ENCODE measurements at regions of chr9 and their contacts with region 1.

Region 1: DNA sequence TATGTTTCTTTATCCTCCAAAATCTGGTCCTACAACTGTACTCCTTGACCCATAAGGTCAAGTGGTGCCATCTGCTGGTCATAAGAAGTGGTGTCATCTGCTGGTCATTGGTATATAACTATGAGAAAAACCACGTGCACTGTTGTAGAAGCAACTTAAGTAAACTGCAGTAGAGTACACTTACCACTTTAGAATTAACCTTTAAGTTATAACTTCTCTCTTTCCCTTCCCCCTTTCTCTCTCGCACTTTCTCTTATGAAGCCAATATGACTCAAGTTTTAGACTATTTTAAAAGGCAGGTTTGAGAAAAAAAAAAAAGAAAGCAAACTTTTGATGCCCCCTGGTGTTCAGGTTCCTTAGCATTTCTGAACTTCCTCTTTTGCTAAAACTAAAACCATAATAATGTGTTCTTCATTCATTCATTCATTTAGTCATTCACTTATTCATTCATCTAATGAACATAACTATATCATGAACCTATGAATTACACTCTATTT is 12.8 kb upstream of the MTAP start:
- DNase-seq: peak; percentile 66 to 76 (median 74)
- H3K4me3 ChIP-seq: no peak overlapping the region
- H3K4me3 Mint-ChIP-seq: peak overlapping the region; percentile 8 to 88 (median 76)
- H3K27ac ChIP-seq: no peak overlapping the region
- H3K27ac Mint-ChIP-seq: peak overlapping the region in 4 of 7 donors; percentile 3 to 61 (median 30)
- H3K4me1 ChIP-seq: no peaks in the 10 kb centered on the region
- H3K4me1 Mint-ChIP-seq: peaks cover 0 to 1% (median 0%) of the 10 kb centered on the region in 4 donors
- H3K27me3 ChIP-seq: no peaks in the 10 kb centered on the region
- H3K27me3 Mint-ChIP-seq: peaks cover 2 to 8% of the 10 kb centered on the region in 2 donors

Region 2: GRCh38 chr9:21154018-21154608 is 635.5 kb before region 1 on chr9:
- CTCF ChIA-PET with region 1: no interaction called
- POLR2A ChIA-PET with region 1: no interaction called
- intact Hi-C with region 1: loop called (anchors 1 kb)
- DNase-seq: peak in 4 of 5 donors; percentile 6 to 27 (median 22)
- H3K4me3 ChIP-seq: no peak overlapping the region
- H3K4me3 Mint-ChIP-seq: peak overlapping the region in 1 of 8 donors; percentile 59
- H3K27ac ChIP-seq: no peak overlapping the region
- H3K27ac Mint-ChIP-seq: peak overlapping the region in 2 of 7 donors; percentile 58 to 59
- H3K4me1 ChIP-seq: peaks cover 4% of the 10 kb centered on the region
- H3K4me1 Mint-ChIP-seq: peaks cover 4 to 9% (median 7%) of the 10 kb centered on the region in 4 donors
- H3K27me3 ChIP-seq: no peaks in the 10 kb centered on the region
- H3K27me3 Mint-ChIP-seq: peaks cover 0 to 1% of the 10 kb centered on the region in 2 donors

Region 3: DNA sequence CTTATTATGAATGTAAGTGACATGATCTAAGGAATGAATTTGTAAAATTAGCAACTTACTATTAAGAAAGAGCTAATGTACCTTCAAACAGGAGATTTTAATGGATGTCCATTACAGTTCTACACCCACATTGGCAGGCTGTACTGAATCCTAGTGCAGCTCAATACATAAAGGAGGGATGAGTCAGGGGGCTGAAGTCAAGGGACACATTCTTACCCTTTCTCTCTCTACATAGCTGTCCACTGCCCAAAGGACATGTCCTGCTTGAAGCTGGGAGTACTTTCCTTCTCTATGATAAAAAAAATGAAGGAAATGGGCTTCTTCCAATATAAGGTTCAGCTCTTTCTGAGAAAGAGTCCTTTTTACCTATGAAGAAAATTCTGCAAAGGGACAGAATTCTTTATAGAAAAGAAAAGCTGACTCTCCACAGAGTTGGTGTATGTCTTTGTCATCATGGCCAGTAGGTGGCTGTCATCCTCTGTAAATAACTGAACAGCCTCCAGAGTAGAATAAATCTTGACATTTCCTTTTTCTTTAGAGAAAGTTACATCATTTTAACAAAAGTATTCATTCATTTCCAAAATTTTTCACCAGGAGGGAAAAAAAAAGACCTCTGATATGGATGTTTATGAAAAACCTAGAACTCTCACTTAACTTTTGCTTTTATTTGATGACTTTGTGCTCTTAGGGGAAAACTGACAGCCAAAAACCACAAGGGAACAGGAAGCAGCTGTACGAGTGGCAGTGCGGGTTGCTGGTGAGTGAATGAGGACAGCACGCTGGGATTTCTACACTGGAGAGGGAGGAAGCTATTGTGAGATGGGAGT is 536.7 kb before region 1 on chr9:
- CTCF ChIA-PET with region 1: interaction called, 4 read pairs
- POLR2A ChIA-PET with region 1: no interaction called
- intact Hi-C with region 1: loop called (anchors 1 kb)
- DNase-seq: peak; percentile 8 to 60 (median 22)
- H3K4me3 ChIP-seq: no peak overlapping the region
- H3K4me3 Mint-ChIP-seq: peak overlapping the region in 3 of 8 donors; percentile 3 to 64 (median 54)
- H3K27ac ChIP-seq: no peak overlapping the region
- H3K27ac Mint-ChIP-seq: no peak overlapping the region
- H3K4me1 ChIP-seq: peaks cover 7% of the 10 kb centered on the region
- H3K4me1 Mint-ChIP-seq: peaks cover 3 to 6% (median 5%) of the 10 kb centered on the region in 4 donors
- H3K27me3 ChIP-seq: no peaks in the 10 kb centered on the region
- H3K27me3 Mint-ChIP-seq: peaks cover 5 to 12% of the 10 kb centered on the region in 2 donors

Region 4: GRCh38 chr9:21326526-21327139 is 463.0 kb before region 1 on chr9:
- CTCF ChIA-PET with region 1: interaction called, 7 read pairs
- POLR2A ChIA-PET with region 1: no interaction called
- intact Hi-C with region 1: loop called (anchors 1 kb)
- DNase-seq: peak in 4 of 5 donors; percentile 57 to 66 (median 61)
- H3K4me3 ChIP-seq: no peak overlapping the region
- H3K4me3 Mint-ChIP-seq: peak overlapping the region in 4 of 8 donors; percentile 36 to 74 (median 44)
- H3K27ac ChIP-seq: no peak overlapping the region
- H3K27ac Mint-ChIP-seq: peak overlapping the region in 4 of 7 donors; percentile 24 to 74 (median 48)
- H3K4me1 ChIP-seq: peaks cover 49% of the 10 kb centered on the region
- H3K4me1 Mint-ChIP-seq: peaks cover 34 to 59% (median 52%) of the 10 kb centered on the region in 4 donors
- H3K27me3 ChIP-seq: no peaks in the 10 kb centered on the region
- H3K27me3 Mint-ChIP-seq: no peaks in the 10 kb centered on the region

Region 5: DNA sequence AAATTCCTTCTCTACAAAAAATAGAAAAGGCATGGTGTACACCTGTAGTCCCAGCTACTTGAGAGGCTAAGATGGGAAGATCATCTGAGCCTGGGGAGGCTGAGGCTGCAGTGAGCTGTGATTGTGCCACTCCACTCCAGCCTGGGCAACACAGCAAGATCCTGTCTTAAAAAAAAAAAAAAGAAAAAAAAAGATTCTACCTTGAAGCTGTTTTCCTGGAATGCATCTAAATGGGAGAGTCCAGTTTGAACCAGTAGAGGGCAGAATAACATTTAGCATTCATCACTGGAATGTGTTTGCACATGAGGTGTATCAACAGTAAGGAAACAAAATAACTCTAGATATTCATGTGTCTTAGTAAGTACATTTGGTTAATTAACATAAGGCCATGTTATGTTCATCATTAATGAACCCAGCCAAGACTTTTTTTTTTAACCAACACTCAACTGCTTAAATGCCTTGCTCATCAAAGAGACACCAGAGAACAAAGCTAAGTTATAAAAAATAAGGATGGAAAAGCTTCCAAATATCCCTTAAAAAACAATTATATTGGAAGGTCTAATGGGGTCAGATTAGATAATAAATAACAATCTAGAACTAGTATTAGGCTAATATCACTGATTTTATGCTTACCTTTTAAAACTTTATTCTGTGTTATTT is 323.6 kb before region 1 on chr9:
- CTCF ChIA-PET with region 1: interaction called, 27 read pairs
- POLR2A ChIA-PET with region 1: interaction called, 3 read pairs
- intact Hi-C with region 1: loop called (anchors 1 kb)
- DNase-seq: peak; percentile 43 to 57 (median 50)
- H3K4me3 ChIP-seq: no peak overlapping the region
- H3K4me3 Mint-ChIP-seq: no peak overlapping the region
- H3K27ac ChIP-seq: no peak overlapping the region
- H3K27ac Mint-ChIP-seq: no peak overlapping the region
- H3K4me1 ChIP-seq: no peaks in the 10 kb centered on the region
- H3K4me1 Mint-ChIP-seq: peaks cover 0 to 2% (median 0%) of the 10 kb centered on the region in 4 donors
- H3K27me3 ChIP-seq: no peaks in the 10 kb centered on the region
- H3K27me3 Mint-ChIP-seq: peaks cover 5 to 7% of the 10 kb centered on the region in 2 donors

Region 6: DNA sequence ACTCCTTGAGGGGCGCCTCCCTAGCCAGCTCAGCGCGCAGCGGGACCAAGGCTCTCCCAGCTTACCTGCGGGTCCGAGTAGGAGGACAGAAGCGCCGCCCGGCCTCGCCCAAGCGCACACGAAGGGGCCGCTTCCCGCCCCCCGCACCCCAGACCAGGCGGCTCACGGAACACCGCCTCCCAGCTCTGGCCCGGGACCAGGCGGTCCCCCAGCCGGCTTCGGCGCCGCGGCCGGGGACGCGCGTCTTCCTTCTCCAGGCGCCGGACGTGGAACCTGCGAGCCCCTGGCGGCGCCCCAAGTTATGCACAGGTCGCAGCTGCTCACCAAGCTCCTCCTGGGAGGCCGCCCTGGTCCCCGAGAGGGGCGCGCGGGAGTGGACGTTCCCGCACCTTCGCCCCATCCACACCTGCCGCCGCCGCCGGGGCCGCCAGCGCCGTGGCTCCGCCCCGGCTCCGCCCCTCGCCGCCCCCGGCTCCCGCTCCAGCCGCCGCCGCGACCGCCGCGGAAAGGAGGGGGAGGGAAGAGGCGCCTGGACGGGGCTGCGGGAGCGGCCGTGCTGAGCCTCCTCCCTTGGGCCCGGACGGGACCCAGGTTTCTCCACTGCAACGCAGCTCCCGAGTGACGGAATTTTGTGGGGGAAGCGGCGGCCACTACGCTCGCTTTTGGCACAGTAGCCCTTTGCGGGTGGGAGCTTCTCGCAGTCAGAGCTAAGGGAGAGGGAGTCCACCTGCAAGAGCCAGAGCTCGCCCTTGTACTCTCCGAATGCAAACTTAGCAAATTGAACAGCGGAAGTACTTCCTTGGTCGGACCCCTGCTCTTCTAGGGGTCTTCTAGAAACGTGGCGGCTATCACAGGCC is 229.9 kb before region 1 on chr9:
- CTCF ChIA-PET with region 1: no interaction called
- POLR2A ChIA-PET with region 1: no interaction called
- intact Hi-C with region 1: loop called (anchors 5 kb)
- DNase-seq: peak; percentile 48 to 65 (median 52)
- H3K4me3 ChIP-seq: peak overlapping the region; percentile 59 to 65
- H3K4me3 Mint-ChIP-seq: peak overlapping the region; percentile 81 to 97 (median 88)
- H3K27ac ChIP-seq: no peak overlapping the region
- H3K27ac Mint-ChIP-seq: peak overlapping the region in 3 of 7 donors; percentile 48 to 80 (median 79)
- H3K4me1 ChIP-seq: peaks cover 21% of the 10 kb centered on the region
- H3K4me1 Mint-ChIP-seq: peaks cover 16 to 27% (median 21%) of the 10 kb centered on the region in 4 donors
- H3K27me3 ChIP-seq: peaks cover 32% of the 10 kb centered on the region
- H3K27me3 Mint-ChIP-seq: peaks cover 22% of the 10 kb centered on the region in 2 donors

Region 7: DNA sequence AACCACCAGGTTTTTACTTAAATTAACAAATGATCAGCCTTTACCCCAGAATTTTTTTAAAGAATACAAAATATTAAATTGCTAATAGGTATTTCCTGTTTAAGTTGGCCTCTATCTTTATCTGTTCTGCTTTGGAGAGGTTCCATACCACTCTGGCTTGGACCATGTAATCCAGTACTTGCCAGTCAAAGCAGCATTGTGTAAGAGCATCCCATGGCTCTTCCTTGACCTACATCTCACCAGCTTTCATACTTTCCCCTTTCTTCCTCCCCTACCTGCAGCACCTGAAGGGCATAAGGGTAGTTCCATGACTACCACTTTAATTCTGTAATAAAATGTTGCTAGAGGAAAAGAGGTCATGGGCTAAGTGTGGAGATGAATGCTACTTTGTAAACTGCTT is 128.0 kb before region 1 on chr9:
- CTCF ChIA-PET with region 1: no interaction called
- POLR2A ChIA-PET with region 1: no interaction called
- intact Hi-C with region 1: no loop called
- DNase-seq: no peak
- H3K4me3 ChIP-seq: no peak overlapping the region
- H3K4me3 Mint-ChIP-seq: no peak overlapping the region
- H3K27ac ChIP-seq: no peak overlapping the region
- H3K27ac Mint-ChIP-seq: peak overlapping the region in 1 of 7 donors; percentile 85
- H3K4me1 ChIP-seq: no peaks in the 10 kb centered on the region
- H3K4me1 Mint-ChIP-seq: no peaks in the 10 kb centered on the region
- H3K27me3 ChIP-seq: no peaks in the 10 kb centered on the region
- H3K27me3 Mint-ChIP-seq: no peaks in the 10 kb centered on the region

Region 8: GRCh38 chr9:21709464-21710058 is 80.0 kb before region 1 on chr9:
- CTCF ChIA-PET with region 1: interaction called, 166 read pairs
- POLR2A ChIA-PET with region 1: no interaction called
- intact Hi-C with region 1: loop called (anchors 1 kb)
- DNase-seq: peak; percentile 44 to 57 (median 50)
- H3K4me3 ChIP-seq: no peak overlapping the region
- H3K4me3 Mint-ChIP-seq: no peak overlapping the region
- H3K27ac ChIP-seq: no peak overlapping the region
- H3K27ac Mint-ChIP-seq: peak overlapping the region in 1 of 7 donors; percentile 43
- H3K4me1 ChIP-seq: no peaks in the 10 kb centered on the region
- H3K4me1 Mint-ChIP-seq: peaks cover 0 to 8% (median 5%) of the 10 kb centered on the region in 4 donors
- H3K27me3 ChIP-seq: peaks cover 4% of the 10 kb centered on the region
- H3K27me3 Mint-ChIP-seq: peaks cover 1 to 3% of the 10 kb centered on the region in 2 donors

Region 9: GRCh38 chr9:21764846-21765245 is 24.7 kb before region 1 on chr9:
- CTCF ChIA-PET with region 1: no interaction called
- POLR2A ChIA-PET with region 1: no interaction called
- intact Hi-C with region 1: no loop called
- DNase-seq: no peak
- H3K4me3 ChIP-seq: no peak overlapping the region
- H3K4me3 Mint-ChIP-seq: no peak overlapping the region
- H3K27ac ChIP-seq: no peak overlapping the region
- H3K27ac Mint-ChIP-seq: no peak overlapping the region
- H3K4me1 ChIP-seq: no peaks in the 10 kb centered on the region
- H3K4me1 Mint-ChIP-seq: peaks cover 4 to 6% (median 4%) of the 10 kb centered on the region in 4 donors
- H3K27me3 ChIP-seq: no peaks in the 10 kb centered on the region
- H3K27me3 Mint-ChIP-seq: peaks cover 11 to 18% of the 10 kb centered on the region in 2 donors

Region 10: GRCh38 chr9:21852754-21853153 is 63.2 kb after region 1 on chr9:
- CTCF ChIA-PET with region 1: no interaction called
- POLR2A ChIA-PET with region 1: no interaction called
- intact Hi-C with region 1: no loop called
- DNase-seq: peak in 1 of 5 donors; percentile 10
- H3K4me3 ChIP-seq: no peak overlapping the region
- H3K4me3 Mint-ChIP-seq: no peak overlapping the region
- H3K27ac ChIP-seq: no peak overlapping the region
- H3K27ac Mint-ChIP-seq: peak overlapping the region in 6 of 7 donors; percentile 4 to 55 (median 28)
- H3K4me1 ChIP-seq: peaks cover 15% of the 10 kb centered on the region
- H3K4me1 Mint-ChIP-seq: peaks cover 32 to 56% (median 38%) of the 10 kb centered on the region in 4 donors
- H3K27me3 ChIP-seq: no peaks in the 10 kb centered on the region
- H3K27me3 Mint-ChIP-seq: no peaks in the 10 kb centered on the region

Measured in CD4-positive, alpha-beta memory T cell (primary cell).